ENCODE measurements at regions of chr11 and their contacts with region 1.

Region 1: GRCh38 chr11:61446211-61446651 is 16.3 kb downstream of the SDHAF2 start:
- DNase-seq: no peak
- ATAC-seq: peak; percentile 99
- H3K4me3 ChIP-seq: no peak overlapping the region
- H3K27ac ChIP-seq: no peak overlapping the region
- H3K4me1 ChIP-seq: no peaks in the 10 kb centered on the region
- H3K27me3 ChIP-seq: no peaks in the 10 kb centered on the region
- CTCF ChIP-seq: peak; percentile 82 to 87 (median 83)
- EP300 ChIP-seq: no peak
- POLR2A ChIP-seq: no peak
- RAD21 ChIP-seq: peak; percentile 58

Region 2: GRCh38 chr11:61075891-61076290 is 370.3 kb before region 1 on chr11:
- CTCF ChIA-PET with region 1: no interaction called
- POLR2A ChIA-PET with region 1: no interaction called
- RAD21 ChIA-PET with region 1: no interaction called
- SMC1A ChIA-PET with region 1: no interaction called
- in situ Hi-C with region 1: no loop called
- intact Hi-C with region 1: no loop called
- DNase-seq: no peak
- ATAC-seq: no peak
- H3K4me3 ChIP-seq: no peak overlapping the region
- H3K27ac ChIP-seq: no peak overlapping the region
- H3K4me1 ChIP-seq: peaks cover 11% of the 10 kb centered on the region
- H3K27me3 ChIP-seq: no peaks in the 10 kb centered on the region
- CTCF ChIP-seq: no peak
- EP300 ChIP-seq: no peak
- POLR2A ChIP-seq: no peak
- RAD21 ChIP-seq: no peak

Region 3: GRCh38 chr11:61378713-61379313 is 67.4 kb before region 1 on chr11:
- CTCF ChIA-PET with region 1: no interaction called
- POLR2A ChIA-PET with region 1: no interaction called
- RAD21 ChIA-PET with region 1: no interaction called
- SMC1A ChIA-PET with region 1: no interaction called
- in situ Hi-C with region 1: no loop called
- intact Hi-C with region 1: no loop called
- DNase-seq: no peak
- ATAC-seq: no peak
- H3K4me3 ChIP-seq: no peak overlapping the region
- H3K27ac ChIP-seq: no peak overlapping the region
- H3K4me1 ChIP-seq: no peaks in the 10 kb centered on the region
- H3K27me3 ChIP-seq: no peaks in the 10 kb centered on the region
- CTCF ChIP-seq: no peak
- EP300 ChIP-seq: no peak
- POLR2A ChIP-seq: no peak
- RAD21 ChIP-seq: no peak

Region 4: DNA sequence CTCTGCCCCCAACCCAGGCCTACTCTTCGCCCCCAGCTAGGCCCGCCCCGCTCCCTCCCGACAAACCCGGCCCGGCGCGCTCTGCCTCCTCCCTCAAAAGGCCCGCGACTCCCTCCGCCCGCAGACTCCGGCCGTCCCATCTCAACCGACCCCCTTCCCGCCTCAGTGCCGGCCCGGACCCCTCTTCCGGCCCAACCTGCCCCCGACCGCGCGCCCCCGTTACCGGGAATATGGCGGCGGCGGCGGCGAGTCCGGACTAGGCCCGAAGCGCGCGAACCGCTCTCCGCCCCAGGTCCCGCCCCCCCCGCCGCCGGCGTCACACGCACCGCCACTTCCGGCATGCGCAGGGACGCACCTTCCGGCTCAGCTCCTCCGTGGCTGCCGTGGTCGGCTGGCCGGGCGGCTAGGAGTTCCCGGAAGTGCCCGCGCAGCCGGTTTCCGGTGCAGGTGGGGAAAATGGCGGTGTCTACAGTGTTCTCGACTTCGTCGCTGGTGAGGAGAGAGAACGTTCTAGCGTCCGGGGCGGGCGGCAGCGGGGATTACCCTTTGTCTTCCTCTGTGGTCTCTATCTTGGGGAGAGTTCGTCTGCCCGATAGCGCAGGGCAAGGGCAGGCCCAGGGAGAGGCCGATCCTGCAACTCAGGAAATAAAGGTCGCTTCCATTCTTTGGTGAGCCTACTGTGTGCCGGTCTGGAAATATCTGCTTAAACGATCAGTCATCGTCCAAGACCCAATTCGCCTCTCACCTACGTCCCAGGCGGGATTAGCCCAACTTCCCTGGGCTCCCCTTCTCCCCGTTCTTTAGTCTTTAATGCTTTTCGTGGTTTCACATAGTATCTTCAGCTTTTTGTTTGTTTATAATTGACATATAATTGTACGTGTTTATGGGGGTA is 16.3 kb before region 1 on chr11 and contains the starts of genes CPSF7 and SDHAF2:
- CTCF ChIA-PET with region 1: interaction called, 75 read pairs
- POLR2A ChIA-PET with region 1: interaction called, 3 read pairs
- RAD21 ChIA-PET with region 1: no interaction called
- SMC1A ChIA-PET with region 1: interaction called, 3 read pairs
- in situ Hi-C with region 1: no loop called
- intact Hi-C with region 1: no loop called
- DNase-seq: peak; percentile 69
- ATAC-seq: peak; percentile 93
- H3K4me3 ChIP-seq: peak within 1 kb of the TSS; percentile 87
- H3K27ac ChIP-seq: peak within 1 kb of the TSS; percentile 99
- H3K4me1 ChIP-seq: peaks cover 7% of the 10 kb centered on the region
- H3K27me3 ChIP-seq: no peaks in the 10 kb centered on the region
- CTCF ChIP-seq: no peak
- EP300 ChIP-seq: no peak
- POLR2A ChIP-seq: peak; percentile 93
- RAD21 ChIP-seq: no peak
- polyA plus RNA-seq, gene CPSF7: 14.9 to 21.9 TPM
- polyA plus RNA-seq, gene SDHAF2: 155 to 160 TPM

Region 5: DNA sequence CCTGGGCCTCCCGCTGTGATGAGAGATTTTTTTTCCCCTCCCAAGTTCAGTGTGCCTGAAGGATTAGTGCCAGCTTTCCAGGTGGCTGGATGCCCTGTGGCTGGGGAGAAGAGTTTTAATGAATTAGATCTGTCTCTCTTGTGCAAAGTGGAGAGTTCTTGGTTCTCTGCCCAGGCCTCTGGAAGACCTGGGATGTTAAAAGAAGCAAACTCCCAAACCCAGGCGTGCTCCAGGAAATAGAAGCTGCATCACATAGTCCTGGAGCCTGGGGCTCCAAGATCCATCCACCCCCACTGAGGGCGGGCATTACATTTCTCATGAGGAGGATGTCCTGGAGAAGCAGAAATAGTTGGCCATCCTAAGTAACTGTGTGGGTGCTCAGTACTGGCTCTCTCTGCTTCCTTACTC is 14.2 kb after region 1 on chr11:
- CTCF ChIA-PET with region 1: interaction called, 32 read pairs
- POLR2A ChIA-PET with region 1: interaction called, 9 read pairs
- RAD21 ChIA-PET with region 1: no interaction called
- SMC1A ChIA-PET with region 1: no interaction called
- in situ Hi-C with region 1: no loop called
- intact Hi-C with region 1: no loop called
- DNase-seq: no peak
- ATAC-seq: no peak
- H3K4me3 ChIP-seq: no peak overlapping the region
- H3K27ac ChIP-seq: no peak overlapping the region
- H3K4me1 ChIP-seq: no peaks in the 10 kb centered on the region
- H3K27me3 ChIP-seq: no peaks in the 10 kb centered on the region
- CTCF ChIP-seq: no peak
- EP300 ChIP-seq: no peak
- POLR2A ChIP-seq: no peak
- RAD21 ChIP-seq: no peak

Region 6: DNA sequence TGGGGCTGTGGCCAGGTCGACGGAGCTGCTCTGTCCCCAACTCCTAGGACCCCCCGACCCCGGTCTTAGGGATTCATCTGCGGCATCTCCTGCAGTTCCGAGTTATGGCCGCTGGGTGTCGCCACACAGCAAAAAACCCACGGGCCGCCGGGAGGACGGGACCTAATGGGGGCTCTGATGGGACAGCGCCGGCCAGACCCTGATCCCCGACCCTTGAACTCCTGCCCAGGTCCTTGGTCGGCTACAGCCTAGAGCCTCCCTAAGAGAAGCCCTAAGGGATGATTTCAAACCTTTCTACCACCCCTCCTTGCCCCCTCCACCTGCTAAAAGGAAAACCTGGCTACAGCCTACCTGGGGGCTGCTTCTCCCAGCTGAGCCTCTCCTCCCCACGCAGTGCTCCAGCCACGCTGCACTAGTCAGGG is 31.5 kb after region 1 on chr11:
- CTCF ChIA-PET with region 1: interaction called, 17 read pairs
- POLR2A ChIA-PET with region 1: no interaction called
- RAD21 ChIA-PET with region 1: no interaction called
- SMC1A ChIA-PET with region 1: interaction called, 3 read pairs
- in situ Hi-C with region 1: no loop called
- intact Hi-C with region 1: no loop called
- DNase-seq: no peak
- ATAC-seq: peak; percentile 72
- H3K4me3 ChIP-seq: no peak overlapping the region
- H3K27ac ChIP-seq: no peak overlapping the region
- H3K4me1 ChIP-seq: no peaks in the 10 kb centered on the region
- H3K27me3 ChIP-seq: no peaks in the 10 kb centered on the region
- CTCF ChIP-seq: peak; percentile 86 to 95 (median 89)
- EP300 ChIP-seq: no peak
- POLR2A ChIP-seq: no peak
- RAD21 ChIP-seq: peak; percentile 82

Region 7: DNA sequence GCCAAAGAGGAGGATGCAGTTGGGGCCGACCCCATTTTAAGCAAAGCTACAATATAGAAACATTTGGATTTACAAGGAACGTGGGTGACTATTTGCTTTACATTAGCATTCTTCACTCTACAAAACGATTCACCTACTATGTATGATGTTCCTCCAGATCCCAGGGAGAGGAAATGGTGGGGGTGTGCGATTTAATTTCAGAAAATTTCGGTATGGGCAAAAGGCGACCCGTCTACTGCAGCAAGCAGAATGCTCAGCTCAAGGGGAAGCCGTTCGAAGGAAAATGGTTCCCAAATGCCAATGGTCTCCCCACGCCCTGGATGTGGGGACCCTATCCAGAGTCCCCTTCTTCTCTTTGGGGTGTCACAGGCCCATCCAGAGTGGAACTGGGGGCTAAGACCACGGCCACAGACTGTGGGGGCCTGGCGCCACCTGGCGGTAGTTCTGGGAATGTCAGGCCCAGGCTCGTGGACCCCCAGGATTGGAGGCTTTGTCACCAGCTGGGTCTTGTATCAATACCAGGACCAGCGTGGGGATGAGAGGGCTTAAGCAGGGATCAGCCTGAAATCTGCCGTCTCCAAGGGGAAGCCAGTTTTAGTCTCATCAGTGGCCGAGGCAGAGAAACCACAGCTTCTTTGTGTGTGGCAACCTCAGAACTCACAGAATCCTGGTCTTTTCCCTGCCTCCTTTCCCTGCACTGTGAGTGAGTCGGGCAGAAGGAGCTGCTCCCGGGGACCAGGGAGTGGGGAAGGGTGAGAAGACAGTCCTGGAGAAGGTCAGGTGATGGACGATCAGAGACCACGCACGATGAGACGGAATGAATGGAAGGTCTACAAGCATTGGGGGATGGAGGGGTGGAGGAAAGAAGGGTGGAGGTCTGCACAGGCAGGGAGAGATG is 70.7 kb after region 1 on chr11:
- CTCF ChIA-PET with region 1: interaction called, 34 read pairs
- POLR2A ChIA-PET with region 1: no interaction called
- RAD21 ChIA-PET with region 1: interaction called, 26 read pairs
- SMC1A ChIA-PET with region 1: no interaction called
- in situ Hi-C with region 1: no loop called
- intact Hi-C with region 1: loop called (anchors 1 kb)
- DNase-seq: no peak
- ATAC-seq: peak; percentile 87
- H3K4me3 ChIP-seq: no peak overlapping the region
- H3K27ac ChIP-seq: no peak overlapping the region
- H3K4me1 ChIP-seq: no peaks in the 10 kb centered on the region
- H3K27me3 ChIP-seq: no peaks in the 10 kb centered on the region
- CTCF ChIP-seq: peak; percentile 88 to 99 (median 97)
- EP300 ChIP-seq: no peak
- POLR2A ChIP-seq: no peak
- RAD21 ChIP-seq: peak; percentile 79

Region 8: GRCh38 chr11:61639816-61640443 is 193.7 kb after region 1 on chr11:
- CTCF ChIA-PET with region 1: interaction called, 18 read pairs
- POLR2A ChIA-PET with region 1: no interaction called
- RAD21 ChIA-PET with region 1: interaction called, 11 read pairs
- SMC1A ChIA-PET with region 1: interaction called, 3 read pairs
- in situ Hi-C with region 1: no loop called
- intact Hi-C with region 1: no loop called
- DNase-seq: no peak
- ATAC-seq: no peak
- H3K4me3 ChIP-seq: no peak overlapping the region
- H3K27ac ChIP-seq: no peak overlapping the region
- H3K4me1 ChIP-seq: no peaks in the 10 kb centered on the region
- H3K27me3 ChIP-seq: peaks cover 0 to 2% of the 10 kb centered on the region in 2 experiments; a peak in 1 of 4 replicates
- CTCF ChIP-seq: no peak
- EP300 ChIP-seq: no peak
- POLR2A ChIP-seq: no peak
- RAD21 ChIP-seq: no peak

Region 9: DNA sequence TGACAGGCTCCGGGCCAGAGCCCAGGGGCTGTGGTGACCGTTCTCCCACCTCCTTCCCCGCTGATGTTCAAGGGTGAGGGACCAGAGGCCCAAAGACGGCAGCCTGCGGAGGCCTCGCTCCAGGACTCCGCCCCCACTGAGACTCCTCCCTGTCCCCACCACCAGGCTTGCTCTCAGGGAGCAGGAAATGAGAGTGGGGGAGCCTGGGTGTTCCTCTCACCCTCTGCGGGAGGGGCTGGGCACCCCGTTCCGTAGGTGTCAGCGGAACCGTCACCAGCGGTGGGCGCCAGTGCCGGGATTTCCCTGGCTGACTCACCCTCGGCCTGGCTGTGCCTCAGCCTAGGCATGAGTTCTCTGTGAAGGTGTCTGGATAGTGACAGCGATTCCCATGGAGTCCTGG is 249.7 kb after region 1 on chr11:
- CTCF ChIA-PET with region 1: no interaction called
- POLR2A ChIA-PET with region 1: no interaction called
- RAD21 ChIA-PET with region 1: no interaction called
- SMC1A ChIA-PET with region 1: no interaction called
- in situ Hi-C with region 1: no loop called
- intact Hi-C with region 1: no loop called
- DNase-seq: peak; percentile 27
- ATAC-seq: peak; percentile 86
- H3K4me3 ChIP-seq: no peak overlapping the region
- H3K27ac ChIP-seq: no peak overlapping the region
- H3K4me1 ChIP-seq: peaks cover 6% of the 10 kb centered on the region
- H3K27me3 ChIP-seq: peaks cover 0 to 2% of the 10 kb centered on the region in 2 experiments; a peak in 3 of 4 replicates
- CTCF ChIP-seq: no peak
- EP300 ChIP-seq: no peak
- POLR2A ChIP-seq: no peak
- RAD21 ChIP-seq: no peak

Measured in GM12878 (cell line).